Right ventricle myocardium inferior (tissue), 1 donor: ENCODE measurements at regions of chr3 and their contacts with region 1.

Region 1: DNA sequence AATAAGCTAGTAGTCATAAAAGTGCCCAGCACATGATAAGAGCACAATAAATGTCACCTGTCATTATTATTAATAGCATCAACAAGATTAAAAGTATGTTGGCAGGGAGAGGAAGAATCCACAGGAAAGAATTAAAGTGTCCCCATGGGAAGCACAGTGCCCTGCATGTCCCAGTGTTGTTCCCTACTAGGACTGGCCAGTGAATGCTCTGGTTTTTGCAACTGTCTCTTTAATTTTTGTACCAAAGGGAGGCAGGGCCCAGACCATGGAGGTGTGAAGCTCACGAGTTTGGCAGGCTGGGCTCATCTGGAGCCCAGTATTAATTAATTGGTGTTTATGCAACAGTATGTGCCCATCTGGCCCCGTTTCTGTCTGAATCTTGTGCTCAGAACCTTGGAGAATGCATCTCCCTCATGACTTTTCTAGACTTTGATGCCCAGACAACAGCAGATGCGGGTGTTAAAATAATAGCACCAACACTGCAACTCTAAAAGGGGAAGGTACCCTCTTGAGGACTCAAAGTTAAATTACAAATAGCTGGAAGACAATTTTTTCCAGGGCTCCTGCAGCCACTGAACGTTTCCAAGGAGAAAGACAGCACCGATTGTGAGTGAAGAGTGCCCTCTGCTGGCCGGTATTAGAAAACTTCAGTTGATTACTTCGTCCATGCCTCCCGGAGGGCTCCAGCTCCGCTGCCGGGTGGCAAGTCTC is 71.9 kb upstream of the SPATA12 start:
- DNase-seq: no peak
- ATAC-seq: peak; percentile 81

Region 2: DNA sequence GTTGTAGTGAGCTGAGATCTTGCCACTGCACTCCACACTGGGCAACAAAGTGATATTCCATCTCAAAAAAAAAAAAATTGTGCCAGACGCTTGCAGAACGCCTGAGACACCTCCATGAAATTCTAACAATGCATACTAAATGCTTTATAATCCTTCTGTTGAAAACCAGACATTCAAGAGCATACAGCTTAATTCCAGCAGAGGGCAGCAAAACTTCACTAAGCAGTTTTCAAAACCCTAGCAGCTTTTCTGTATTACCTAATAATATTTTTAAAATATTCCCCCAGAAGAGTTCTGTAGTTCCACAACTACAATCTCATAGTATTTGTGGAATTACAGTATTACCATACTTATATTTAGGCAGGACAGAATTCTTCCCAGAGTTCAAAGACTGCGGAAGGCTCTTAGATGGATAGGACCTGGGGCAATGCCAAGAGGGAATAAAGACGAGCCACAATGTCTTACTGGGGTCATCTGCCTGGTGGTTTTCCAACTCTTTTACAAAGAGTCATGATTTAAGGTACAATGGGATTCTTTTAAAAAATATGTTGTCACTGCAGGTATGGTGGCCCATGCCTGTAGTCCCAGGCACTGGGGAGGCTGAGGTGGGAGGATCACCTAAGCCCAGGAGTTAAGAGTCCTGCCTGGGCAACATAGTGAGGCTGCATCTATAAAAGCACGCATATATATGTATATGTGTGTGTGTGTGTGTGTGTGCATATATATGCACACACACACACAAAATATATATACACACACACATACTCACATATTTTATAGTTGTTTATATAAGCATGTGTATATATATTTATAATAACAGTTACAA is 285.9 kb before region 1 on chr3:
- intact Hi-C with region 1: loop called (anchors 1 kb)
- DNase-seq: no peak
- ATAC-seq: peak; percentile 74

Region 3: GRCh38 chr3:56855856-56856512 is 132.6 kb before region 1 on chr3:
- intact Hi-C with region 1: loop called (anchors 5 kb)
- DNase-seq: no peak
- ATAC-seq: peak; percentile 48

Region 4: GRCh38 chr3:56923521-56924224 is 64.9 kb before region 1 on chr3:
- intact Hi-C with region 1: loop called (anchors 5 kb)
- DNase-seq: no peak
- ATAC-seq: peak; percentile 62

Region 5: DNA sequence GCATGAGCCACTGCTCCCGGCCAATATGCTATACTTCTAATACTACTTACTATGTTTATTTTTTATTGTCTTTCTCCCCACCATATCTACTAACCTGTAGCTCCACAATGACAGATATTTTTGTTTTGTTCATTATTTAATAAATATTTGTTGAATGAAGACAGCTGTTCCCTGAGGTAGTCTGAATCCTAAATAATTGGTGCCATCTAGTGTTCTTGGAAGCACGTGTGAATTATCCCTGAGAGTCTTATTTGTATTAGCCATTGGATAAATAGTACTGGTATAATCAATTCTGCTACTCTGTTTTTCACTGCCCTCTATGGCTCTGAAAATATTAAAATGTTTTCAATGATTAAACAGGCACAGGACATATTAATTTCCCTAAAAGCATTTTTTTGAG is 233.3 kb after region 1 on chr3:
- intact Hi-C with region 1: loop called (anchors 5 kb)
- DNase-seq: no peak
- ATAC-seq: peak; percentile 52

Region 6: DNA sequence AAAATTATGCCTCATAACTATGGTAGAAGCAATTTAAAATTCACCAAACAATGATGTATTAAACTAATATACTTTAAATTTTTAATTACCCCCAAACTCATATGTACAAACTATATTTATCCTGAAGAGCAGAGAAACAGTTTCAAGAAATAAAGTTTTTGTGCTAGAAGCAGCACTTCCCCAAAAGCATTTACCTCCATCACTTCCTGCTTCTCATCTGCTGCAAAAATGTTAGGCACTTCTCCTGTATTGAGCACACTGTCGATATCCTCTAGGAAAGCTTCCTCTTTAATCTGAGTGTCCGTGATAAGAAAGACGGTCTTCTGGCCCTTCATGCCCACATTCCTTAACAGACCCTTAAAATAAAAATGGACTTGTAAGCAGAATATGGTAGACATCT is 405.4 kb after region 1 on chr3:
- intact Hi-C with region 1: no loop called
- DNase-seq: no peak
- ATAC-seq: no peak